Aorta (tissue), 5 donors: ENCODE measurements at regions of chr19 and their contacts with region 1.

Region 1: GRCh38 chr19:4524808-4525562 is 6.7 kb upstream of the PLIN4 start:
- DNase-seq: peak in 1 of 2 donors; percentile 88
- ATAC-seq: peak; percentile 65
- H3K4me3 ChIP-seq: no peak overlapping the region
- H3K27ac ChIP-seq: no peak overlapping the region
- H3K4me1 ChIP-seq: no peaks in the 10 kb centered on the region
- H3K27me3 ChIP-seq: no peaks in the 10 kb centered on the region

Region 2: DNA sequence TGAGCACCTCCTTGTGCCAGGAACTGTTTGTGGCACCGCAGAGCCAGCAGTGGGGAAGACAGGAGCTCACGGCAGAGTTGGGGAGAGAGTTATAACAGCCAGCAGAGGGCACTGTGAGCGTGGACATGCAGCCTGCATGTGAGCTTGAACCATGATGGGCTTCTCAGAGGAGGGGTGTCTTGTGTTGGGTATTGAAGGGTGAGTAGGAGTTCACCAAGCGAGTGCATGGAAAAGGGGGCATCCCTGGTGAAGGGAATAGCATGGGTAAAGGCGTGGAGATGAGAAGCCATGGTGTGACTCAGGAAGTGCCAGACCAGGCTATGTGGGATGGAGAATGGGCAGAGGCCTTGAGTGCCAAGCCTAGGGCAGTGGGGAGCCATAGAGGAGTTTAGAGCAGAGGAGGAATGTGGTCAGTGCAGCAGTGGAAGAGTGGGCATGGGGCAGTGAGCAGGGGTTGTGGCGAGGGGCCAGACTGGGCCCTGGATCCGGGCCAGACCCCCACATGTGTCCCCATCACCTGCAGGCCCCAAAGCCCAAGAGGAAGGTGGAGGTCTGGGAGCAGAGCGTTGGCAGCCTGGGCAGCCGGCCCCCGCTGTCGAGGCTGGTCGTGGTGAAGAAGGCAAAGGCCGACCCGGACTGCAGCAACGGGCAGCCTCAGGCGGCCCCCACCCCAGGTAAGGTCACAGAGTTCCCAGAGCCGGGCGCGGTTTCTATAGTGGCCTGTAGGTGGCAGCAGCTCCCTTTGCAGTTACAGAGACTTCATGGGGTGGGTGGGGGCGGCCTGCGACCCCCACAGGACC is 257.7 kb before region 1 on chr19:
- intact Hi-C with region 1: loop called (anchors 5 to 10 kb)
- DNase-seq: peak; percentile 54 to 85
- ATAC-seq: peak; percentile 70
- H3K4me3 ChIP-seq: no peak overlapping the region
- H3K27ac ChIP-seq: no peak overlapping the region
- H3K4me1 ChIP-seq: no peaks in the 10 kb centered on the region
- H3K27me3 ChIP-seq: no peaks in the 10 kb centered on the region

Region 3: GRCh38 chr19:6312018-6312417 is 1787.0 kb after region 1 on chr19:
- intact Hi-C with region 1: no loop called
- DNase-seq: no peak
- ATAC-seq: no peak
- H3K4me3 ChIP-seq: no peak overlapping the region
- H3K27ac ChIP-seq: no peak overlapping the region
- H3K4me1 ChIP-seq: no peaks in the 10 kb centered on the region
- H3K27me3 ChIP-seq: no peaks in the 10 kb centered on the region